Activated naive CD4-positive, alpha-beta T cell treated with anti-CD3 and anti-CD28 coated beads for 36 hours (primary cell): ENCODE measurements at regions of chr15 and their contacts with region 1.

Region 1: GRCh38 chr15:90851940-90852339 is 16.4 kb upstream of the FURIN start:
- DNase-seq: peak; percentile 59
- H3K4me3 Mint-ChIP-seq: peak overlapping the region; percentile 32
- H3K27ac Mint-ChIP-seq: peak overlapping the region; percentile 97
- H3K4me1 Mint-ChIP-seq: peaks cover 65% of the 10 kb centered on the region
- H3K27me3 Mint-ChIP-seq: no peaks in the 10 kb centered on the region

Region 2: DNA sequence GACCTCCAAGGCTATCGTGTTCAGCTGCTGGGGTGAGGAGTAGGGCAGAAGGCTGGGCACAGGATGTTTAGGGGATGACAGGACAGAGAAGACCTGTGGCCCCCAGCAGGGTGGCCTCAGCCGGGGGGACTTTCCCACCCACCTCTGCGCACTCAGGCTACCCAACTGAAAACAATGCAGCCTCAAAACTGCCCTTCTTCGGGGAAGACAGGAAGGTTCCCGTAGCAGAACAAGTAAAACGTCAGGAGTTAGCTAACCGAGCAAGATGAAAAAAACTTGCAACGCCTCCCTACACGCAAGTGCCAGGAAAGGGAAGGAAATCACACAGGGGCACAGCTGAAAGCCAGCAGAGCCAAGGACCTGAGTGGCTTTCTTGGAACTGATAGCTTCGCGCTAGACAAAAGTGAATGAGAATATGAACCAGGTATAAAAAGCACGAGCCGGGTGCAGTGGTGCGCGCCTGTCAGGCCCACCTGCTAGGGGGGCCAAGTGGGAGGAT is 21.9 kb before region 1 on chr15:
- CTCF ChIA-PET with region 1: interaction called, 3 read pairs
- intact Hi-C with region 1: loop called (anchors 1 kb)
- DNase-seq: peak; percentile 94
- H3K4me3 Mint-ChIP-seq: peak overlapping the region; percentile 62
- H3K27ac Mint-ChIP-seq: peak overlapping the region; percentile 100
- H3K4me1 Mint-ChIP-seq: peaks cover 54% of the 10 kb centered on the region
- H3K27me3 Mint-ChIP-seq: no peaks in the 10 kb centered on the region

Region 3: GRCh38 chr15:90838141-90838540 is 13.8 kb before region 1 on chr15:
- CTCF ChIA-PET with region 1: interaction called, 5 read pairs
- intact Hi-C with region 1: loop called (anchors 1 kb)
- DNase-seq: peak; percentile 97
- H3K4me3 Mint-ChIP-seq: peak overlapping the region; percentile 84
- H3K27ac Mint-ChIP-seq: peak overlapping the region; percentile 97
- H3K4me1 Mint-ChIP-seq: peaks cover 66% of the 10 kb centered on the region
- H3K27me3 Mint-ChIP-seq: no peaks in the 10 kb centered on the region